ENCODE measurements at regions of chr2 and their contacts with region 1.

Region 1: GRCh38 chr2:164717000-164717803 is 95.9 kb upstream of the GRB14 start:
- DNase-seq: peak in 2 of 4 experiments; percentile 11 to 42
- ATAC-seq: no peak
- H3K4me3 ChIP-seq: no peak overlapping the region
- H3K27ac ChIP-seq: no peak overlapping the region
- H3K4me1 ChIP-seq: no peaks in the 10 kb centered on the region
- H3K27me3 ChIP-seq: no peaks in the 10 kb centered on the region
- CTCF ChIP-seq: peak in 2 of 3 experiments; percentile 15 to 67; a peak in 4 of 6 replicates
- EP300 ChIP-seq: no peak
- POLR2A ChIP-seq: no peak
- RAD21 ChIP-seq: peak; percentile 15 to 64; a peak in 2 of 4 replicates

Region 2: DNA sequence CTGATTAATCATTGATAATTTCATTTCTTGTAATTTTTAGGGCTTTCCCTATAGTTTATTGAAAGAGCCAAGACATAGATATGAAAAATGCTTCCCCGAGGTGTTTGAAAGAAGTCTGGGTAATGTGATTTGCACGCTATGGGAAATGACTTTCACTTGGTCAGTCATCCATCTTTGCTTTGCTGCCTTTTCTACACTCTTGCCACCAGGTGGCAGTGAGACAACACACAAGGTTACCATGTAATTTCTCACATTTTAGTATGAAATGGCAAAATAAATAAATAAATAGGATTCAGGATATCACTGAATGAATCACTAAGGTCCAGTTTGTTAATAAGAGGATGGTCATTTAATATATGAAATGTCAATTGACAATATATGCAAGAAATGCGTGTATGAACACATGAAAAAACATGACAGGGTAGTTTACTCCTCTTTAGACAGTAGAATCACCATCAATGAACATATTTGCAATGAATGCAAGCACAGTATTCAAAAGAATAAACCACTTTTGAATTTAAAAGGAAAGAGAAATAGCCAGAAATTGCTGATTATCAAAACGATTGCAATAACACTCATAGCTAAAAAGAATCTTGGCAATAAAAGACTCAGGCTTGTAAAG is 1826.4 kb before region 1 on chr2:
- CTCF ChIA-PET with region 1: no interaction called
- POLR2A ChIA-PET with region 1: no interaction called
- in situ Hi-C with region 1: no loop called
- intact Hi-C with region 1: loop called (anchors 10 kb)
- DNase-seq: peak; percentile 18 to 44 (median 37)
- ATAC-seq: peak; percentile 58; the same call in 2 of the 3 replicates
- H3K4me3 ChIP-seq: no peak overlapping the region
- H3K27ac ChIP-seq: no peak overlapping the region
- H3K4me1 ChIP-seq: no peaks in the 10 kb centered on the region
- H3K27me3 ChIP-seq: no peaks in the 10 kb centered on the region
- CTCF ChIP-seq: peak; percentile 27 to 55 (median 51); a peak in 4 of 6 replicates
- EP300 ChIP-seq: no peak
- POLR2A ChIP-seq: no peak
- RAD21 ChIP-seq: peak; percentile 45 to 69; a peak in 3 of 4 replicates

Region 3: DNA sequence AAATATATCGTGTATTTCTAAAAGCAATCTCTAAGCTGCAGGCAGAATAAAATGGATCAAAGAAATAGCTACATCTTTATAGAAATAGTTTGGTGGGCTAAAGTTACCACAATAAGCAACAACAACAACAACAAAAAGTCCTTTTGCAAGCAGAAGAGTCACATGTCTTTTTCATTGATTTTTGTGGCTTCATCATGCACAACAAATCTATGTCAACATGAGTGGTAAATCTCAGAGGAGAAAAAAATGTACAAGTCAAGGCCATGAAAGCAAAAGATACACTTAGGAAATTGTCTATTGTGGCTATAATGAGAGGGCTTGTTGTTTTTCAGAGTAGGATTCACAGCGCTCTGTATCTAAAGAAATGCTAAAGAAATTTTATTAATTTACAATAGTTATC is 365.7 kb before region 1 on chr2:
- CTCF ChIA-PET with region 1: no interaction called
- POLR2A ChIA-PET with region 1: no interaction called
- in situ Hi-C with region 1: no loop called
- intact Hi-C with region 1: no loop called
- DNase-seq: no peak
- ATAC-seq: no peak
- H3K4me3 ChIP-seq: no peak overlapping the region
- H3K27ac ChIP-seq: no peak overlapping the region
- H3K4me1 ChIP-seq: no peaks in the 10 kb centered on the region
- H3K27me3 ChIP-seq: no peaks in the 10 kb centered on the region
- CTCF ChIP-seq: no peak
- EP300 ChIP-seq: no peak
- POLR2A ChIP-seq: no peak
- RAD21 ChIP-seq: no peak

Region 4: DNA sequence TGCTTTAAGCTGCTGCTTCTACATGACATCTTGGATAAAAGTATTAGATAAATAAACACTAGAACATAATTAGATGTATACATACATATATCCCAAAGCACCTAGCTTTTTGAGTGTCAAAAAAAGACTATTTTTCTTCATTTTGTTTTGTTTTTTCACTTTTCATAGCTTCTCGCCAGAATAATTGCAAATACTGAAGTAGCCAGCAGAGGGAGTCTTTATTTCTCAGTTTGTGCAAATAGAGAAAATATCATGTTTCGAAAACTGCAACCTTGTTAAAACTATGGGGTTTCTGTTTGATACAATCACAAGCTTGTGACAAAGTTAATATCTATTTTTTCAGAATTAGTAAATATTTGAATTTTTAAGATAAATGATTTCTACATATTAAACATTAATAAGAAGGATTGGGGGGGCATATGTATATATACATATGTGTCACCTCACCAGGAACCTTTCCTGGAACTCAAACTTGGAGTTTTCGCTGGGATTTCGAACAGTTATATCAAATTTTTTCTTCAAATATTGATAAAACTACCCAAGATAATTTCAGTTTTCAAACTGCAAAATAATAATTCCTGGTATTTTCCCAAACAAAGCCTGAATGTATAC is 156.9 kb before region 1 on chr2:
- CTCF ChIA-PET with region 1: no interaction called
- POLR2A ChIA-PET with region 1: no interaction called
- in situ Hi-C with region 1: no loop called
- intact Hi-C with region 1: loop called (anchors 2 kb)
- DNase-seq: peak in 1 of 4 experiments; percentile 4
- ATAC-seq: no peak
- H3K4me3 ChIP-seq: no peak overlapping the region
- H3K27ac ChIP-seq: no peak overlapping the region
- H3K4me1 ChIP-seq: no peaks in the 10 kb centered on the region
- H3K27me3 ChIP-seq: no peaks in the 10 kb centered on the region
- CTCF ChIP-seq: peak in 1 of 3 experiments; percentile 52; a peak in 3 of 6 replicates
- EP300 ChIP-seq: no peak
- POLR2A ChIP-seq: no peak
- RAD21 ChIP-seq: peak; percentile 30 to 36; a peak in 2 of 4 replicates

Measured in K562 (cell line).